ENCODE measurements at regions of chr4 and their contacts with region 1.

Region 1: DNA sequence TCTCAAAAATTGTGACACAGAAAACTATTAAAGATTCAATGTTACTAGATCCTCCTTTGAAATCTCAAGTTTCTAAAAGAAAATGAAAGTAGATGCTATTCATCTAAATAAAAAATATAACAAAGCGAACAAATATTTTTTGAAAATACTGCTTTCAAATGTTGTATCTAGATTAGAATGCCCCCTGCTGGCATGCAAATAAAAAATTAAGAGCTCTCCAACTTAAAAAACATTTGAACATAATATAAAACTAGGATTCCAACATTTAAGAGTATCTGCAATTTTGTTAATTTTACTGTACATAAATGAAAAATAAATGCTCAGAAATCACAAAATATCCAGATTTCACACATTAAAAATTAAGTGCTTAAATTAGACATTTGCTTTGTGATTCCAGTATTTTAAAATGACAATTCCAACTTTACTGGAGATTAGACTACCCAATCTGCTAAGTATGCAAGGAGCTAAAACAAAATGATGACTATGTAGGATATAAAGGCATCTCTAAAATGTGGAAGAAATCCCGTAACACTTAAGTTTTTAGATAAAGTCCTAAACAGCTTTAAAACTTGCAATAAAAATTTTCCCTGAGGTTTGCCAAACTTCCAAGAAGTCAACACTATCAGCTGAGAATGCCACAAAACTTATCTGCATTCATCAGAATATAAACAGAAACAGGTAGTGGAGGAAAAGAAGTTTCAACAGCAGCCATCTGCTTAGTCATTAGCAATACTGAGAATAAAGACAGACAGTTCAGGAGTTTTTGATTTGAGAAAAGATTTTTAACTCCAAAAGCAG is 32.7 kb downstream of the DHX15 start:
- DNase-seq: no peak
- H3K4me3 ChIP-seq: no peak overlapping the region
- CTCF ChIP-seq: no peak

Region 2: GRCh38 chr4:24537025-24537424 is 14.7 kb before region 1 on chr4:
- CTCF ChIA-PET with region 1: interaction called, 24 read pairs
- POLR2A ChIA-PET with region 1: no interaction called
- DNase-seq: no peak
- H3K4me3 ChIP-seq: no peak overlapping the region
- CTCF ChIP-seq: no peak

Region 3: DNA sequence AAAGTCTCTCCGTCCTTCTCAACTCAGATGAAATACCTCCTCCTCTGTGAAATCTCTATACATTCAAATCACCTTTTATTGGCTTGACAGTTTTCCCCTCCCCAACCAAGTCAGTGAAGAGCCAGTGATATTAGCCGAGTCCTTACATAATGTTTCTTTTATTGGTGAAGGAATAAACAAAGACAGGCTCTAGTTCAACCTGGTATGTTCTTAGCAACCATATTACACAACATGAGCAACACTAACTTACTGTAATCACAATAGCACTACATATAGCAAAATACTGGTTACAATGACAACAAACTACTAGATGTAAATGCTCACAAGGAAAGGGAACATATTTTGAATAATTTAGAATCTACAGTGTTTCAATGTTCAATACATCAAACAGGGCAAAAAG is 12.8 kb after region 1 on chr4:
- CTCF ChIA-PET with region 1: interaction called, 16 read pairs
- POLR2A ChIA-PET with region 1: no interaction called
- DNase-seq: no peak
- H3K4me3 ChIP-seq: no peak overlapping the region
- CTCF ChIP-seq: no peak

Region 4: GRCh38 chr4:24657768-24658617 is 106.3 kb after region 1 on chr4:
- CTCF ChIA-PET with region 1: no interaction called
- POLR2A ChIA-PET with region 1: no interaction called
- DNase-seq: no peak
- H3K4me3 ChIP-seq: no peak overlapping the region
- CTCF ChIP-seq: no peak

Measured in AG04449 (cell line).